Vagina (tissue), 2 donors: ENCODE measurements at regions of chr17 and their contacts with region 1.

Region 1: DNA sequence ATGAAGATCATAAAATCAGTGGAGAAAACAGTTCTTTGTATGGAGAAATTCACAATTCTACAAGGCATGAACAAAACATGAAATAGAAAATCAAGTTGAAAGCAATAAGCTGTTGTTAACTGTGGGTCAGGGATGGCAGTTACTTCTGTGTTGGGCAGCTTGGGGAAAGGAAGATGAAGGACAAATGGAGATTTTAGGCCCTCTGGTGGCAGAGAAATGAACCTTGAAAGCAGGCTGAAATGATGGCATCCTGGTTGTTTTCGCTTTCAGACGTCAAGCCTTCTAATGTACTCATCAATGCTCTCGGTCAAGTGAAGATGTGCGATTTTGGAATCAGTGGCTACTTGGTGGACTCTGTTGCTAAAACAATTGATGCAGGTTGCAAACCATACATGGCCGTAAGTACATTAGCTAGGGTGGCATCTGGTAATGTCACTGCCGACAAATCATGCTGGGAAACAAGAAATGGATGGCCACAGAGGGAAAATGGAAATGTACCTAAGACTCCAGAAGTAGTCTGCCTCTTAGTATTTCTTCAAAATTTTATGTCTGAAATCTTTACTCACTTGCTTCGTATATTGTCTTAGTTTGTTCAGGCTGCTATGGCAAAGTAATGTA is 108.9 kb downstream of the MAP2K6 start:
- DNase-seq: no peak
- H3K4me3 ChIP-seq: no peak overlapping the region
- H3K27ac ChIP-seq: no peak overlapping the region
- H3K4me1 ChIP-seq: no peaks in the 10 kb centered on the region
- H3K27me3 ChIP-seq: no peaks in the 10 kb centered on the region
- CTCF ChIP-seq: peak; percentile 63 to 79 (median 69)
- POLR2A ChIP-seq: no peak

Region 2: GRCh38 chr17:69335058-69335457 is 188.3 kb before region 1 on chr17:
- intact Hi-C with region 1: loop called (anchors 10 kb)
- DNase-seq: no peak
- H3K4me3 ChIP-seq: no peak overlapping the region
- H3K27ac ChIP-seq: no peak overlapping the region
- H3K4me1 ChIP-seq: no peaks in the 10 kb centered on the region
- H3K27me3 ChIP-seq: no peaks in the 10 kb centered on the region
- CTCF ChIP-seq: peak in 1 of 3 experiments; percentile 23
- POLR2A ChIP-seq: no peak

Region 3: GRCh38 chr17:69448431-69449102 is 74.8 kb before region 1 on chr17:
- intact Hi-C with region 1: no loop called
- DNase-seq: no peak
- H3K4me3 ChIP-seq: no peak overlapping the region
- H3K27ac ChIP-seq: no peak overlapping the region
- H3K4me1 ChIP-seq: peaks cover 5% of the 10 kb centered on the region
- H3K27me3 ChIP-seq: no peaks in the 10 kb centered on the region
- CTCF ChIP-seq: no peak
- POLR2A ChIP-seq: no peak

Region 4: GRCh38 chr17:69773081-69773480 is 249.7 kb after region 1 on chr17:
- intact Hi-C with region 1: no loop called
- DNase-seq: no peak
- H3K4me3 ChIP-seq: no peak overlapping the region
- H3K27ac ChIP-seq: no peak overlapping the region
- H3K4me1 ChIP-seq: no peaks in the 10 kb centered on the region
- H3K27me3 ChIP-seq: no peaks in the 10 kb centered on the region
- CTCF ChIP-seq: no peak
- POLR2A ChIP-seq: no peak

Region 5: GRCh38 chr17:70552230-70552981 is 1029.1 kb after region 1 on chr17:
- intact Hi-C with region 1: loop called (anchors 10 kb)
- DNase-seq: no peak
- H3K4me3 ChIP-seq: no peak overlapping the region
- H3K27ac ChIP-seq: no peak overlapping the region
- H3K4me1 ChIP-seq: no peaks in the 10 kb centered on the region
- H3K27me3 ChIP-seq: no peaks in the 10 kb centered on the region
- CTCF ChIP-seq: peak; percentile 30 to 52 (median 40)
- POLR2A ChIP-seq: no peak